ENCODE measurements at regions of chr12 and their contacts with region 1.

Region 1: DNA sequence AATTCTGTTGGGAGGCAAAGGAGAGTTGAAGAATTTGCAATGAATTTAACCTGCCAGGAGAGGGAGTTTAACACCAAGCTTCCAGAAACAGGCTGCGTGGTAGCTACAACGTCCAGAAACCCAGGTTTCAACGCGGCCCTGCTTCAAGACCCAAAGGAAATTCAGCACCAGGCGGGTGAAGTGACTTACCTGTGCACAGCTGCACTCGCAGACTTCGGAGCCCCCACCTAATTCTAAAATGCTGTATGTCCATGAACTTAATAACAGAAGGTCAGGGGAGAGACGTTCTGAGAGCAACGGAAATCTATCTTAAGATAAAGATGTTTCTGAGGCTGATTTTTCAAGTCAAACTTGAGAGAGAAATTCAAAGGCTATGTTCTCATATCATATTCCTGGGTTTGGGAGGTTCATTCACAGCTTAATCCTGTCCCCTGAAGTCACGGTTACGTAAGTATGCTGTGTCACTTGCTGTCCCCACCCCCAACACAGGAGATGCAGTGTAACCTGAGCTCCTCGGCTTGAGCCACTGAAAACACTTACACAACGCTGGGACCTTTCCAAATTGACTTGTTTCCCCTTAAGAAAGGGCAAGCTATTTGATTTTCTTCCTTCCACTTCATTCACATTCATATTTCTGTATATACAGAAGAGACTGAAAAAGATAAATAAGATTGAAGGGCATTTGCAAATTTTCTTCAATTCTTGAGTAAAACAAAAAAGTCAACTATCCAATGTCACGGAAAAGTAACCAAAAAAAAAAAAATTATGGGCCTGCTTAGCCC is 22.7 kb downstream of the CLIP1 start:
- DNase-seq: peak; percentile 96
- ATAC-seq: peak; percentile 85
- H3K4me3 ChIP-seq: peak overlapping the region; percentile 62
- H3K27ac ChIP-seq: peak overlapping the region; percentile 95
- H3K4me1 ChIP-seq: peaks cover 26% of the 10 kb centered on the region
- H3K27me3 ChIP-seq: no peaks in the 10 kb centered on the region
- CTCF ChIP-seq: peak; percentile 94

Region 2: DNA sequence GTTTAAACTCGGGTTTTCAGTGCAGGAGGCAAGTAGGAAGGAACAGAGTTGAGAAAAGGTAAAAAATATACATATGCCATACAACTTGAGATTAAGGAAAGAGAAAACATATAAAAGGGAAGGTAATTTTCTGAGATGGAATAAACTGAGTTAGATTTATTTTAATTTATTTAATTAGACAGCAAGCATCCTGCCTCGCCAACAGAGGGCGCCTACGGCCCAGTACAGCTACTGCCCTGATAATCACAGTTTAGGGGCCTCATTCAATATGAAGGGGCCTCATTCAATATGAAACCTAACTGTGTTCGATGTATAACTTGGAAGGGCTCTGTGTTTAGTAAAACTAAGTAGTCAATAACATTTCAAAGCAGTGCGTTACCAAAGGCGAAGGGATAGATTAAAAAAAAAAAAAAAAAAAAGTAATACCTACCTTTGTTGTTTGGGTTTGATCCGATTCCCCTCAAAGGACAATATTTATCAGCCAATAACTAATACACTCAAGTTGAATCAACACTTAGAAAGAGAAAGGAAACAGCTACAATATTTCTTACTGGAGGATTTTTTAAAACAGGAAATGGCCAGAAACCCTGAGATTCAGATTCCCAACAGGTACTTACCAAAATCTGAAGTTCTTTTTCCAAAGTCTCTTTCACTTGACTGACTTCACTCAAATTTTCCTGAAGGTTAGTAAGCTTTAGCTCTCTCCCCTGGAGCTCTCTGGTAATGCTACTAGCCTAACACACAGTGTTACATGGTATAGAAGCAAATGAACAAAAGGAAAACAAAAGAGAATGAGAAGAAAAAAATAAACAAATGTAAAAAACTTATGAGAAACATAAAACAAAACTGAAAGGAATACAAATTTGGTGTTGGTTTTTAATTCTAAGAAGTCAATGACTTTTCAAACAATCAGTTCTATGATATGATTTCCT is 63.5 kb before region 1 on chr12:
- CTCF ChIA-PET with region 1: interaction called, 11 read pairs
- POLR2A ChIA-PET with region 1: no interaction called
- intact Hi-C with region 1: no loop called
- DNase-seq: peak; percentile 36
- ATAC-seq: peak; percentile 62
- H3K4me3 ChIP-seq: no peak overlapping the region
- H3K27ac ChIP-seq: no peak overlapping the region
- H3K4me1 ChIP-seq: no peaks in the 10 kb centered on the region
- H3K27me3 ChIP-seq: no peaks in the 10 kb centered on the region
- CTCF ChIP-seq: peak; percentile 95

Region 3: DNA sequence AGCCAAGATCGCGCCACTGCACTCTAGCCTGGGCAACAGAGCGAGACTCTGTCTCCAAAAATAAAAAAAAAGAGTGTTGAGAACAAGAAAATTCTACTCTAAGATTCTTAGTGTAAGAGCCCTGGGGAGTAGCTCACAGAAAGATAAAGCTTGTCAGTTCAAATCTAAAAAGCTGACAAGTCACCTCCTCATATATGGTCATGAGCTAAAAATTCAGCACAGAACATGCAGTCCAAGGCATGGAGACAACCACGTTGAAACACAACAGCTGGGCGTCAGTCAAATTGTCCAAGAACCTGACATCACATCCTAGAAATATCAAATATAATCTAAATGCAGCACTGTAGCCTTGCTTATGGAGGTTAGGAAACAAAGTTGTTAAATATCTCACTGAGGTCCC is 25.1 kb before region 1 on chr12:
- CTCF ChIA-PET with region 1: no interaction called
- POLR2A ChIA-PET with region 1: no interaction called
- intact Hi-C with region 1: no loop called
- DNase-seq: no peak
- ATAC-seq: no peak
- H3K4me3 ChIP-seq: no peak overlapping the region
- H3K27ac ChIP-seq: no peak overlapping the region
- H3K4me1 ChIP-seq: no peaks in the 10 kb centered on the region
- H3K27me3 ChIP-seq: no peaks in the 10 kb centered on the region
- CTCF ChIP-seq: no peak

Region 4: DNA sequence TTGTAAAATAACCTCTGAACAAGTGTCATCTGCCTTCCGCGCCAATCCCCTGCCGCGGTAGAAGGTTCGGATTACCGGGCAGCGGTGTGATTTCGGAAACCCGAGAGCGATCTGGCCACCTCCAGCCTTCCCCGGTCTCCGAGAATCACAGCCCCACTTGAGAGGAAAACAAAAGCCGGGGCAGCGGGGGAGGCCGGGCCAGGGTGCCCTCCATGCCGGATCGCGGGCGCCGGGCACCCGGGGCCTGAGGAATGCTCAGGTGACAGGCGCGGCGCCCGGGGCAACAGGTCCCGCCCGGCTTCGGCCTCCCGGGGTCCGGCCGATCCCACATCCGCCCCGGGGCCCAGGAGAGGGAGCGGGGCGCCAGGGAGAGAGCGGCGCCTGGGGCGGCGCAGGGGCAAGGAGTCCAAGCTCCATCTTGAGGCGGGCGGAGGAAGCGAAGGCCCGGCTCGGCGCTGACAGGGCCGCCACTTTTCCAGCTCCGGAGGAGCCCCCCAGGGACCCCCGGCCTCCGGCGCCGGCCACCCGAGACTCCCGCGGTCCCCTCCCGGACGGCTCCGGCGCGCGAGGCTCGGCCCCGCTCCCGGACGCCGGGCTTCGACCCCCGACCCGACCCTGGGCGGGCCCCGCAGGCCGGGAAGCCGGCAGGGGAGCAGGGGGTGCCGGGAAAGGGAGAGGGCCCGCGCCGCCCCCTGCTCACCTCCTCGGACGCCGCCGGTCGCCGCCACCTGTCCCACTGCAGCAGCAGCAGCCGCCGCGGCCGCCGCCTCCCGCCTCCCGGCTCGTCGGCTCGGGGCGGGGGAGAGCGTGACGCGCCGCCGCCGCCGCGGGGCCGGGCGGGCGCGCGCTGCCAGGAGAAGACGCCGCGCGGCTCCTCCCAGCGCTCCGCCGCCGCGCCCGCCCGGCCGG is 22.3 kb after region 1 on chr12 and contains the start of gene CLIP1:
- CTCF ChIA-PET with region 1: interaction called, 8 read pairs
- POLR2A ChIA-PET with region 1: interaction called, 8 read pairs
- intact Hi-C with region 1: loop called (anchors 1 kb)
- DNase-seq: peak; percentile 74
- ATAC-seq: peak; percentile 73
- H3K4me3 ChIP-seq: peak within 1 kb of the TSS; percentile 86
- H3K27ac ChIP-seq: peak within 1 kb of the TSS; percentile 86
- H3K4me1 ChIP-seq: peaks cover 40% of the 10 kb centered on the region
- H3K27me3 ChIP-seq: no peaks in the 10 kb centered on the region
- CTCF ChIP-seq: peak; percentile 55
- total RNA-seq, gene CLIP1: 46.4 and 57.9 TPM in 2 replicates

Region 5: GRCh38 chr12:122449353-122449752 is 49.6 kb after region 1 on chr12:
- CTCF ChIA-PET with region 1: interaction called, 18 read pairs
- POLR2A ChIA-PET with region 1: no interaction called
- intact Hi-C with region 1: loop called (anchors 1 kb)
- DNase-seq: peak; percentile 99
- ATAC-seq: peak; percentile 98
- H3K4me3 ChIP-seq: no peak overlapping the region
- H3K27ac ChIP-seq: peak overlapping the region; percentile 67
- H3K4me1 ChIP-seq: peaks cover 17% of the 10 kb centered on the region
- H3K27me3 ChIP-seq: no peaks in the 10 kb centered on the region
- CTCF ChIP-seq: no peak

Region 6: GRCh38 chr12:122471324-122472226 is 71.8 kb after region 1 on chr12:
- CTCF ChIA-PET with region 1: interaction called, 80 read pairs
- POLR2A ChIA-PET with region 1: interaction called, 4 read pairs
- intact Hi-C with region 1: loop called (anchors 1 kb)
- DNase-seq: peak; percentile 85
- ATAC-seq: peak; percentile 83
- H3K4me3 ChIP-seq: no peak overlapping the region
- H3K27ac ChIP-seq: no peak overlapping the region
- H3K4me1 ChIP-seq: peaks cover 5% of the 10 kb centered on the region
- H3K27me3 ChIP-seq: no peaks in the 10 kb centered on the region
- CTCF ChIP-seq: peak; percentile 94

Region 7: GRCh38 chr12:122500685-122501488 is 101.1 kb after region 1 on chr12 and contains the start of gene ZCCHC8:
- CTCF ChIA-PET with region 1: interaction called, 8 read pairs
- POLR2A ChIA-PET with region 1: interaction called, 17 read pairs
- intact Hi-C with region 1: loop called (anchors 1 kb)
- DNase-seq: peak; percentile 99
- ATAC-seq: peak; percentile 94
- H3K4me3 ChIP-seq: peak within 1 kb of the TSS; percentile 83
- H3K27ac ChIP-seq: peak within 1 kb of the TSS; percentile 79
- H3K4me1 ChIP-seq: peaks cover 19% of the 10 kb centered on the region
- H3K27me3 ChIP-seq: no peaks in the 10 kb centered on the region
- CTCF ChIP-seq: peak; percentile 35; the same call in 1 of the 2 replicates
- total RNA-seq, gene ZCCHC8: 14.4 and 15.0 TPM in 2 replicates

Region 8: GRCh38 chr12:123106628-123107359 is 707.0 kb after region 1 on chr12:
- CTCF ChIA-PET with region 1: no interaction called
- POLR2A ChIA-PET with region 1: interaction called, 10 read pairs
- intact Hi-C with region 1: no loop called
- DNase-seq: peak; percentile 39
- ATAC-seq: peak; percentile 31; the same call in 1 of the 2 replicates
- H3K4me3 ChIP-seq: no peak overlapping the region
- H3K27ac ChIP-seq: 0 out of 2 replicates have a peak overlapping the region, but pooled peaks have one; percentile 10
- H3K4me1 ChIP-seq: peaks cover 29% of the 10 kb centered on the region
- H3K27me3 ChIP-seq: no peaks in the 10 kb centered on the region
- CTCF ChIP-seq: no peak

Measured in PC-3 (cell line).